ENCODE measurements at regions of chr1 and their contacts with region 1.

Region 1: DNA sequence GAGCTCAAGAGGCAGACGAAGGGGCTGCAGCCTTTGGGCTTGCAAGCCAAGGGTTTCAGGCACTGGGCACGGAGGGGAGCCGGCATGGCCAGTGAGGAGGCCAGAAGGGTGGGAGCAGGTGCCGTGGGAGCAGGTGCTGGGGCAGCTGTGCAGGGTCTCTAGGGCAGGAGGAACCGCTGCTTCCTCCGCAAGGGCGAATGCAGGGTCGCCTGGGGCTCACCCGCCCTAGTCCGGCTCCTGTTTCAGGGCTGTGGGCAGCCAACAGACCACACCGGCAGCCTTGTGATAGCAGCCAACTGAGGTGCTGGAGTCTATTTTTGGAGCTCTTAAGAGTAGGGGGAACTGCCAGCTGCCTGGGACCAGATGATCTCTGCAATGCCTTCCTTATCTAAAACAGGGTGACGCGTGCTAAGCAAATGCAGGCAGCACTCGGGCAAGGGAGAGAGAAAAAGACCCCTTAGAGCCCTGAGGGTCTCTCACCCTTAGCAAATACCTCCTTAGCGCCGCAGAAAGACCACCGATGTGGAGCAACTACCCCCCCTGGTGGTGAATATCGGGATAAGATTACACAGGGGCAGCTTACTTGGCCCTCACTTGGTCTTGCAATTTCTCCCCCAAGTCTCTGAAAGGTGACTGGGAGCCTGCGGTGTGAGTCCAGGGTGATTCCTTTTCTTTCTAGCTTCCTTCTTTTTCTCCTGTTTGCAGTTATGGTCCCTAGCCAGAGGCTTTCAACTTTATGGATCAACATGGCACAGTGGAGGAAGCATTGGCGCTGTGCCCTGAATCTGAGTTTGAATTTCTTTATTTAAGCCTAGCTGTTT is 20.7 kb upstream of the MAPKAPK2 start:
- DNase-seq: peak; percentile 50 to 77 (median 63)
- H3K4me3 ChIP-seq: no peak overlapping the region
- H3K4me3 Mint-ChIP-seq: peak overlapping the region in 1 of 7 donors; percentile 18
- H3K27ac ChIP-seq: no peak overlapping the region
- H3K27ac Mint-ChIP-seq: no peak overlapping the region
- H3K4me1 ChIP-seq: peaks cover 14% of the 10 kb centered on the region
- H3K4me1 Mint-ChIP-seq: peaks cover 14 to 20% (median 15%) of the 10 kb centered on the region in 3 donors
- H3K27me3 ChIP-seq: peaks cover 5% of the 10 kb centered on the region
- H3K27me3 Mint-ChIP-seq: peaks cover 15 to 30% of the 10 kb centered on the region in 2 donors

Region 2: DNA sequence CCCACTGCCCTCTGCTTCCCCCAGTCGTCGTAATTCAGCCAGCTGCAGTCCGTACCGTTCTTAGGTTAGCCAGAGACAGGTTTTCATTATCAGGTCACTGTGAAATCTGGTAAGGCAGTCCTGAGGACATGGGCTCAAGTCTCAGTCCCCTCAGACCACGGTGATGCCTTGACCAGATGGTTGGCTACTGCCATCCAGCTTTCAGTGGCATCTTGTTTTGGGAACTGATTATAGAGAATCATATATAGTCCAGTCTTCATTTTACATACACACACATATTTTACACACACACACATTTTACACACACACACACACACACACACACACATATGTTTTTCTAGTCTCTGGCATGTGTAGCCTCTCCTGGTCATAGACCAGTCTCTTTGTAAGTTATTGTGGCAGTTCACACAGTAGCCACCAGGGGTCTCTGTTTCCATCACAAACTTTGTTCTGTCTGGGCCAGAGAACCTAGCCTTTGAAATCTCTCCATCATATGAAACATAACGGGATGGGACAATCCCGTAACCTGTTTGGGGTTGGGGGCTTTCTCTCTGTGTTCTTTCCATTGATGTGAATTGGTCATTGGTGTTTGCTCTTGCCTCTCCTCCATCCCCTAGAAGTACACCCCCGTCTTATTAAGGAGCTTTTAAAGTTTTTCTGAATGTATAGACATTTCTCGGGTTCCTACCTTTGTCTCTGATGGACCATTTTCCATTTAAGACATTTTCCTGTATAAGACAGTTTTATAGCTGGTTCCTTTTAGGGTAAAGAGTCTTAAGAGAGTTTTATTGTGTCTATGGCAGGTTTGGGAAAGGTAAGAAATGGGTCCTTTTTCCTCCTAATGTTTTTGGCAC is 202.2 kb before region 1 on chr1:
- CTCF ChIA-PET with region 1: interaction called, 21 read pairs
- POLR2A ChIA-PET with region 1: no interaction called
- DNase-seq: peak; percentile 47 to 77 (median 55)
- H3K4me3 ChIP-seq: no peak overlapping the region
- H3K4me3 Mint-ChIP-seq: no peak overlapping the region
- H3K27ac ChIP-seq: no peak overlapping the region
- H3K27ac Mint-ChIP-seq: peak overlapping the region in 3 of 8 donors; percentile 49 to 87 (median 67)
- H3K4me1 ChIP-seq: peaks cover 32% of the 10 kb centered on the region
- H3K4me1 Mint-ChIP-seq: peaks cover 12 to 28% (median 25%) of the 10 kb centered on the region in 3 donors
- H3K27me3 ChIP-seq: no peaks in the 10 kb centered on the region
- H3K27me3 Mint-ChIP-seq: no peaks in the 10 kb centered on the region

Region 3: GRCh38 chr1:206489980-206490770 is 173.9 kb before region 1 on chr1:
- CTCF ChIA-PET with region 1: interaction called, 28 read pairs
- POLR2A ChIA-PET with region 1: no interaction called
- DNase-seq: peak; percentile 45 to 71 (median 51)
- H3K4me3 ChIP-seq: no peak overlapping the region
- H3K4me3 Mint-ChIP-seq: no peak overlapping the region
- H3K27ac ChIP-seq: peak overlapping the region; percentile 27
- H3K27ac Mint-ChIP-seq: peak overlapping the region in 3 of 8 donors; percentile 23 to 60 (median 51)
- H3K4me1 ChIP-seq: no peaks in the 10 kb centered on the region
- H3K4me1 Mint-ChIP-seq: no peaks in the 10 kb centered on the region
- H3K27me3 ChIP-seq: no peaks in the 10 kb centered on the region
- H3K27me3 Mint-ChIP-seq: no peaks in the 10 kb centered on the region

Region 4: DNA sequence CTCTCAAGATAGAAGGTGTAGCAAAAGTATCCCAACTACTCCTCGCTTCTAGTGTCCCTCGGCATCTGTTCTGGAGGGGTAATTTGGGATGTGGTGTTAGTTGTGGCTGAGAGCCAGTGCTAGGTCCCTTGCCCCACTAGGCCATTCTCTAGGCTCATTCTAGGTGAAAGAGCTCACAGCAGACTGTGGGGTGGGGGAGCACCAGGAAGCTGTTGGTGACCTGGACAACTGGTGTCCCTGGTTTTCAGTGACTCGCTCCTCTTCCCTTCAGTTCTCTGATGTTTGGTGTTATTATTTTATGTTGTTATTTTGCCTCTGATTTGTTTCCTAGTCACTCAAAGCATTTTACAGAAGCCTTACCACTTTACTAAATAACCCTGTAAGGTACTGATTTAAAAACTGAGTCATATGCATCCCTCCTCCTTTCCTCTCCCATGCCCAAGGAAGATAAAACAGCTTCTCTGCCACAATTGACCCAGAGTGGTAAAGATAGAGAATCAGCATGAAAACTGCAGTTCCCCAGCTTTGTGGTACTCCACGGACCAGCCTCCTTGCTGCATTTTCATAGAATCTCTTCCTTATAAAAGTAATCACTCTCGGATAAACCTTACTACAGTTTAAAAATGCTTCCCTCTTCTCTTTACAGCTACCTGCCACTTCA is 14.7 kb before region 1 on chr1:
- CTCF ChIA-PET with region 1: interaction called, 13 read pairs
- POLR2A ChIA-PET with region 1: no interaction called
- DNase-seq: no peak
- H3K4me3 ChIP-seq: no peak overlapping the region
- H3K4me3 Mint-ChIP-seq: no peak overlapping the region
- H3K27ac ChIP-seq: no peak overlapping the region
- H3K27ac Mint-ChIP-seq: no peak overlapping the region
- H3K4me1 ChIP-seq: no peaks in the 10 kb centered on the region
- H3K4me1 Mint-ChIP-seq: no peaks in the 10 kb centered on the region
- H3K27me3 ChIP-seq: no peaks in the 10 kb centered on the region
- H3K27me3 Mint-ChIP-seq: peaks cover 0 to 2% of the 10 kb centered on the region in 2 donors

Region 5: GRCh38 chr1:206679738-206680211 is 15.7 kb after region 1 on chr1:
- CTCF ChIA-PET with region 1: interaction called, 19 read pairs
- POLR2A ChIA-PET with region 1: no interaction called
- DNase-seq: no peak
- H3K4me3 ChIP-seq: no peak overlapping the region
- H3K4me3 Mint-ChIP-seq: peak overlapping the region in 1 of 7 donors; percentile 42
- H3K27ac ChIP-seq: no peak overlapping the region
- H3K27ac Mint-ChIP-seq: peak overlapping the region in 1 of 8 donors; percentile 71
- H3K4me1 ChIP-seq: peaks cover 13% of the 10 kb centered on the region
- H3K4me1 Mint-ChIP-seq: peaks cover 6 to 17% (median 13%) of the 10 kb centered on the region in 3 donors
- H3K27me3 ChIP-seq: no peaks in the 10 kb centered on the region
- H3K27me3 Mint-ChIP-seq: peaks cover 7% of the 10 kb centered on the region in 2 donors